ENCODE measurements at regions of chr17 and their contacts with region 1.

Region 1: DNA sequence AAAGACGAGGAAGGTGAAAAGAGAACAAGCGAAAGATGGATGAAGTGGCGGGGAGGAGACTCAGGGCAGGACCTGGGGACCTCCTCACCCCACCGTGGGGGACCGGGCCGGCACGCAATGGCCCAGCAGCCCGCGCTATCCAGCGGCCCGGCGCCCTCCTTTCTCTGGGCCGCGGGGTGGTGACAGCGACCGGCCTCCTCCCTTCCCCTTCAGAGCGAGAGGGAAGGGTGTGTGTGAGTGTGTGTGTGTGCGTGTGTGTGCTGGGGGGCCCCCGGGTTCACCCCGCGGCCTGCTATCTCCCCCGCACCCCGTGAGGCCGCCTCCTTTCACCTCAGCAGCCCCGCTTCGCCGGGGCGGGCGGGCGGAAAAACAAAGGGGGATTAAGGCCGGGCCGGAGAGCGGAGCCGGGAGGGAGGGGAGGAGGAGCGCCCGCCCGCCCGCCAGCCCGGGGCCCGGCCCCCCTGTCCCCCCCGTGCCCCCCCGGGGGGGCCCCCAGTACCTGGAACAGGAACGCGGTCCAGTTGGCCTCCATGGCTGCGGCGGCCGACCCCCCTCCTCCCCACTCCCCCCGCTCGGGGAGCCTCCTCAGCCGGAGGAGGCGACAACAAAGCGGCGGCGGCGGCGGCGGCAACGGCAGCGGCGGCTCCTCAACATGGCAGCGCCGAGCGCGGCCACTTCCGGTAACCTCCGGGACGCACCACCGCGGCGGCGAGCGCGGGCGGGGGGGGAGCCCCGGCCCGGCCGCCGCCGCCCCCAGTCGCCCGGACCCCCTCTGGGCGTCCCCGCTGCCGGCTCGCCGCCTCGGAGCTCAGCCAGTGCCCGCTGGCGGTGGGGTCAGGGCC is at the start of gene VEZF1:
- DNase-seq: no peak
- H3K4me3 ChIP-seq: peak within 1 kb of the TSS; percentile 89 to 97 (median 91)
- H3K27ac ChIP-seq: peak within 1 kb of the TSS; percentile 96 to 99 (median 98)
- H3K4me1 ChIP-seq: peaks cover 6 to 57% (median 43%) of the 10 kb centered on the region in 3 donors
- H3K27me3 ChIP-seq: no peaks in the 10 kb centered on the region
- CTCF ChIP-seq: no peak
- POLR2A ChIP-seq: peak in 2 of 4 donors; percentile 14 to 56
- total RNA-seq, gene VEZF1: 20.3 to 61.4 (median 27.4) TPM

Region 2: GRCh38 chr17:57892146-57892828 is 95.5 kb before region 1 on chr17:
- intact Hi-C with region 1: loop called (anchors 10 kb)
- DNase-seq: peak; percentile 33
- H3K4me3 ChIP-seq: peak overlapping the region in 1 of 4 donors; percentile 45
- H3K27ac ChIP-seq: peak overlapping the region; percentile 85 to 96 (median 94)
- H3K4me1 ChIP-seq: peaks cover 53 to 89% (median 71%) of the 10 kb centered on the region in 3 donors
- H3K27me3 ChIP-seq: no peaks in the 10 kb centered on the region
- CTCF ChIP-seq: peak; percentile 95 to 99 (median 98)
- POLR2A ChIP-seq: no peak

Measured in esophagus squamous epithelium (tissue), 5 donors.